GM12878 (cell line): ENCODE measurements at regions of chr5 and their contacts with region 1.

Region 1: GRCh38 chr5:40879163-40879942 is 29.9 kb upstream of the C7 start:
- DNase-seq: no peak
- ATAC-seq: peak; percentile 67
- H3K4me3 ChIP-seq: no peak overlapping the region
- H3K27ac ChIP-seq: no peak overlapping the region
- H3K4me1 ChIP-seq: no peaks in the 10 kb centered on the region
- H3K27me3 ChIP-seq: no peaks in the 10 kb centered on the region
- CTCF ChIP-seq: peak; percentile 6 to 48 (median 46); a peak in 4 of 6 replicates
- EP300 ChIP-seq: no peak
- POLR2A ChIP-seq: no peak
- RAD21 ChIP-seq: peak; percentile 45; the same call in 1 of the 2 replicates

Region 2: DNA sequence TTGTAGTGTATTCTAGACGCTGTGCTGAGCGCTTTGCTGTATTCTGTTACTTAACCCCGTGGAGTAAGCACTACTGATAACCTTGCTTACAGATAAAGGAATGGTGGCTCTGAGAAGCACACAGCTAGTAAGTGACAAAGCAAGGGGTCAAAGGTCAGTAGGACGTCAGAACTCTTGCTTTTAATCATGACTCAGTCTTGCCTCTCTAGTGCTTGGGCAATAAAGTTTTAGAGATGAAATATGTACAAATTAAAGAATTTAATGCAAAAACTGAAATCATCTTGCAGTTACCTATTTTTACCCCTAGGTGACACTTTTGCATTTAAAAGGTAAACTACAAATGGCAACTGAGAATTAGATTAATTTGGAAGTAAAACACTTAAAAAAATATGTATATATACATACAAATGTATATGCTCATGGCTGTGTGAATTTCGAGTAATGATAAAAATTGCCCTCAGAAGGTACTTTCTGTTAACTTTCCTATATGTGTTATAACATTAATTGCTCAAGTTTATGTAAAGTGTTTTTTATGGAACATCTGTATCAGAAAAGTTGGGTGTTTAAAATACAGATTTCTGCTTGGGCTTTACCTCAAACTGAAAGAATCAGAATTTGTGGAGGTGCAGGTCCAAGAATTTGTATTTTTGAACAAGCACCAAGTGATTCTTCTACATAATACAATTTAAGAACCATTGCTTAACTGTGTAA is 1279.5 kb before region 1 on chr5:
- CTCF ChIA-PET with region 1: no interaction called
- POLR2A ChIA-PET with region 1: no interaction called
- RAD21 ChIA-PET with region 1: no interaction called
- SMC1A ChIA-PET with region 1: no interaction called
- in situ Hi-C with region 1: loop called (anchors 10 kb)
- intact Hi-C with region 1: no loop called
- DNase-seq: no peak
- ATAC-seq: no peak
- H3K4me3 ChIP-seq: no peak overlapping the region
- H3K27ac ChIP-seq: no peak overlapping the region
- H3K4me1 ChIP-seq: no peaks in the 10 kb centered on the region
- H3K27me3 ChIP-seq: peaks cover 0 to 2% of the 10 kb centered on the region in 2 experiments; a peak in 1 of 4 replicates
- CTCF ChIP-seq: peak; percentile 24 to 49 (median 48); a peak in 3 of 6 replicates
- EP300 ChIP-seq: no peak
- POLR2A ChIP-seq: no peak
- RAD21 ChIP-seq: peak; percentile 49

Region 3: DNA sequence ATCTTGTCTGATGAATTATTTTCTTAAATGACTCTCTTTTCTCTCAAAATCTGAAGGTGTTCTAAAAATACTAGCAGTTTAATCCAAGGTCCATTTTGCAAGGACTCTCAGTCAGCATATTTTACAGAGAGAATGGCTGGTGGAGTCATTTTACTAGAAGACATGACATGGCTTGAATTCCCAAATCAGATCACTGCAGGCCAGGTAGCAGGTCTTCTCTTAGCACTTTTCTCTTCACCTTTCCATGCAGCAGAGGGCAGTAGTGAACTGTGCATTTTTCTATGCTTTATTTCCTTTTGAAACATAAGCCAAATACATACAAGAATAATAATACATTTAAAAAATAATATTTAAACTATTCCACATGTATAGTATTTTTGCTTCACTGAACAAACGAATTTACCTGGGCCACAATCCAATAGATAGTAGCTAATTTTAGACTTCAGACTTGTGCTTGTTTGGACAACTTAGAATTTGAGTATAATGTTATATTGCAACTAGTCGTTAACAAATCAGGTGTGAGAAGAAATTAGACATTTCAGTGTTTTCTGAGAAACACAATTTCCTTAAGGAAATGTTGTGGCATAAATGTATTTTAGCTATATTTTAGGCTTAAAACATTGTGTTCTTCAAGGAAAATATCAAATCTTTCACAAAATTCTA is 1165.2 kb before region 1 on chr5:
- CTCF ChIA-PET with region 1: no interaction called
- POLR2A ChIA-PET with region 1: no interaction called
- RAD21 ChIA-PET with region 1: no interaction called
- SMC1A ChIA-PET with region 1: no interaction called
- in situ Hi-C with region 1: loop called (anchors 10 kb)
- intact Hi-C with region 1: loop called (anchors 5 kb)
- DNase-seq: peak; percentile 3
- ATAC-seq: peak; percentile 63
- H3K4me3 ChIP-seq: no peak overlapping the region
- H3K27ac ChIP-seq: no peak overlapping the region
- H3K4me1 ChIP-seq: no peaks in the 10 kb centered on the region
- H3K27me3 ChIP-seq: no peaks in the 10 kb centered on the region
- CTCF ChIP-seq: peak; percentile 49 to 53 (median 52)
- EP300 ChIP-seq: no peak
- POLR2A ChIP-seq: no peak
- RAD21 ChIP-seq: peak; percentile 87

Region 4: DNA sequence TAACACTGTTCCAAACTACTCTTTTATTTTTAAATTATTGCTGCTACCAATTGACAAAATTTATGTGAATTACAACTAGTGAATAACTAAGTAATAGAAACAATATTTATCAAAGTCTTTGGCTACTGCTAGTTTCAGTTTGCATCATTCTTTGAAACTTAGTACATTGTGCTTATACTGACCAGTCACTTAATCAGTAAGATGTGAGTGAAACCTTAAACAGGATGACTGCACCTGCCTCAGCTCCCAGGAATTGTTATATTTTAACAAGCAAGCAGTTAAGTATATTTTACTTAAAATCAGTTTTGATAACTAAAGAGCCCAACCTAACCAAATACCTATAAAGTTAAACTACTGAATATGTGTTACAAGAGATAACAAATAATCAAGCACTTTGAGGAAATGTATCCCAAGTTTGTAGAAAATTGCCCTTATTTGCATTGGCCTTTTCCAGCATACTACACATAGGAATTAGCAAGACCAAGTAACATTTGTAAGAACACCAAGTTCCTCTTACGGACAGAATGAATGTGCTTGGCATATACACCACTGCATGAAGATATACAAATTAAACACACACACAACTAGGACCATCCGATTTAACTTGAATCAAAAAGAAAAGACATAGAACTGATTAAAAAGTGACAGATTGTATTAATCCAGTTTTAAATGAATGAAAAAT is 909.1 kb before region 1 on chr5:
- CTCF ChIA-PET with region 1: no interaction called
- POLR2A ChIA-PET with region 1: no interaction called
- RAD21 ChIA-PET with region 1: no interaction called
- SMC1A ChIA-PET with region 1: no interaction called
- in situ Hi-C with region 1: loop called (anchors 25 kb)
- intact Hi-C with region 1: no loop called
- DNase-seq: no peak
- ATAC-seq: no peak
- H3K4me3 ChIP-seq: no peak overlapping the region
- H3K27ac ChIP-seq: no peak overlapping the region
- H3K4me1 ChIP-seq: no peaks in the 10 kb centered on the region
- H3K27me3 ChIP-seq: no peaks in the 10 kb centered on the region
- CTCF ChIP-seq: no peak
- EP300 ChIP-seq: no peak
- POLR2A ChIP-seq: no peak
- RAD21 ChIP-seq: no peak

Region 5: GRCh38 chr5:40755407-40756365 is 123.7 kb before region 1 on chr5 and contains the start of gene TTC33:
- CTCF ChIA-PET with region 1: no interaction called
- POLR2A ChIA-PET with region 1: no interaction called
- RAD21 ChIA-PET with region 1: no interaction called
- SMC1A ChIA-PET with region 1: no interaction called
- in situ Hi-C with region 1: no loop called
- intact Hi-C with region 1: loop called (anchors 2 kb)
- DNase-seq: peak; percentile 61
- ATAC-seq: peak; percentile 95
- H3K4me3 ChIP-seq: peak within 1 kb of the TSS; percentile 88
- H3K27ac ChIP-seq: peak within 1 kb of the TSS; percentile 74
- H3K4me1 ChIP-seq: peaks cover 7% of the 10 kb centered on the region; the same call in 1 of the 2 replicates
- H3K27me3 ChIP-seq: no peaks in the 10 kb centered on the region
- CTCF ChIP-seq: peak; percentile 61 to 87 (median 69)
- EP300 ChIP-seq: no peak
- POLR2A ChIP-seq: no peak; the same call in none of the 2 replicates
- RAD21 ChIP-seq: peak; percentile 21; the same call in 1 of the 2 replicates
- polyA plus RNA-seq, gene TTC33: 13.4 to 20.3 TPM

Region 6: GRCh38 chr5:40866291-40866690 is 13.1 kb before region 1 on chr5:
- CTCF ChIA-PET with region 1: no interaction called
- POLR2A ChIA-PET with region 1: no interaction called
- RAD21 ChIA-PET with region 1: no interaction called
- SMC1A ChIA-PET with region 1: no interaction called
- in situ Hi-C with region 1: no loop called
- intact Hi-C with region 1: no loop called
- DNase-seq: no peak
- ATAC-seq: no peak
- H3K4me3 ChIP-seq: no peak overlapping the region
- H3K27ac ChIP-seq: no peak overlapping the region
- H3K4me1 ChIP-seq: no peaks in the 10 kb centered on the region
- H3K27me3 ChIP-seq: no peaks in the 10 kb centered on the region; a peak in 1 of 4 replicates
- CTCF ChIP-seq: no peak
- EP300 ChIP-seq: no peak
- POLR2A ChIP-seq: no peak
- RAD21 ChIP-seq: no peak